Cardiac septum (tissue), 1 donor: ENCODE measurements at regions of chr16 and their contacts with region 1.

Region 1: GRCh38 chr16:1048442-1049112 is 24.0 kb upstream of the SSTR5 start:
- DNase-seq: no peak

Region 2: GRCh38 chr16:832652-833336 is 215.8 kb before region 1 on chr16:
- intact Hi-C with region 1: loop called (anchors 5 kb)
- DNase-seq: no peak

Region 3: GRCh38 chr16:1125471-1125870 is 76.9 kb after region 1 on chr16:
- intact Hi-C with region 1: no loop called
- DNase-seq: no peak